Sigmoid colon (tissue), 7 donors: ENCODE measurements at regions of chr1 and their contacts with region 1.

Region 1: DNA sequence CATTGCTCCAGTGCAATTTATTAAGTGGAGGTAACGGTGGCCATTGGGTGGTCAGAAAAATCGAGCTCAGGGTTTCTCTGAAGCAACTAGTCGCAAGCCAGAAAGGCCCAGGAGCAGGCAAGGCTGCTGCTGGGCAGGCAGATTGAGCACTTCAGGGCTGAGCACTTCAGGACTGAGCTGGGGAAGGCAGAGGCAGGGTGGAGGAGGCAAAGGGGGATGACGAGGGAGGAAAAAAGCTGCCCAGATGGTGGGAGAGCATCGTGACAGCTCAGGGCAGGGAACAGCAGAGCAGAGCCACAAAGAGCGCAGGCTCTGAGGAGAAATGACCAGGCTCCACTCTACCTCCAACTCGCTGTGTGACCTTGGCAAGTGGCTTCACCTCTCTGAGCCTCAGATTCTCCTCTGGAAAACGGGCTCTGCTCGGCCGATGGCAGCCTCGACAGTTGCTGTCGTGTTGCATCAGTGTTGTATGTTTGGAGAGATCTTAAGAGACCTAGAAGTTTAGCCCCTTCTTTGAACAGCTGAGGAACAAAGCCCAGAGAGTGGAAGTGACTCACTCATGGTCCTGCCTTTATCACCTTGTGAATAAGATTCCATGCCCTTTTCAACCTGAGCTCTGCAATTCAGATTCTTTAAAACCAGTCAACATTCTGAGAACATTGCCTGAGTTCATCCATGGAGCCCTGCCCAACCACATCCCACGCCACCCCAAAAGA is 141.4 kb downstream of the SYF2 start:
- DNase-seq: no peak
- H3K4me3 ChIP-seq: no peak overlapping the region
- H3K27ac ChIP-seq: no peak overlapping the region
- H3K4me1 ChIP-seq: no peaks in the 10 kb centered on the region
- H3K27me3 ChIP-seq: peaks cover 0 to 15% (median 5%) of the 10 kb centered on the region in 3 donors
- CTCF ChIP-seq: no peak
- EP300 ChIP-seq: no peak
- POLR2A ChIP-seq: no peak

Region 2: GRCh38 chr1:24694380-24694843 is 396.5 kb before region 1 on chr1:
- intact Hi-C with region 1: loop called (anchors 5 kb)
- DNase-seq: peak; percentile 71
- H3K4me3 ChIP-seq: no peak overlapping the region
- H3K27ac ChIP-seq: peak overlapping the region in 2 of 4 donors; percentile 43 to 59
- H3K4me1 ChIP-seq: peaks cover 0 to 15% (median 13%) of the 10 kb centered on the region in 4 donors
- H3K27me3 ChIP-seq: no peaks in the 10 kb centered on the region
- CTCF ChIP-seq: no peak
- EP300 ChIP-seq: peak in 1 of 4 donors; percentile 37
- POLR2A ChIP-seq: no peak